Cardiac septum (tissue), 1 donor: ENCODE measurements at regions of chr6 and their contacts with region 1.

Region 1: GRCh38 chr6:170165072-170165463 is 125.8 kb downstream of the DLL1 start:
- DNase-seq: no peak

Region 2: DNA sequence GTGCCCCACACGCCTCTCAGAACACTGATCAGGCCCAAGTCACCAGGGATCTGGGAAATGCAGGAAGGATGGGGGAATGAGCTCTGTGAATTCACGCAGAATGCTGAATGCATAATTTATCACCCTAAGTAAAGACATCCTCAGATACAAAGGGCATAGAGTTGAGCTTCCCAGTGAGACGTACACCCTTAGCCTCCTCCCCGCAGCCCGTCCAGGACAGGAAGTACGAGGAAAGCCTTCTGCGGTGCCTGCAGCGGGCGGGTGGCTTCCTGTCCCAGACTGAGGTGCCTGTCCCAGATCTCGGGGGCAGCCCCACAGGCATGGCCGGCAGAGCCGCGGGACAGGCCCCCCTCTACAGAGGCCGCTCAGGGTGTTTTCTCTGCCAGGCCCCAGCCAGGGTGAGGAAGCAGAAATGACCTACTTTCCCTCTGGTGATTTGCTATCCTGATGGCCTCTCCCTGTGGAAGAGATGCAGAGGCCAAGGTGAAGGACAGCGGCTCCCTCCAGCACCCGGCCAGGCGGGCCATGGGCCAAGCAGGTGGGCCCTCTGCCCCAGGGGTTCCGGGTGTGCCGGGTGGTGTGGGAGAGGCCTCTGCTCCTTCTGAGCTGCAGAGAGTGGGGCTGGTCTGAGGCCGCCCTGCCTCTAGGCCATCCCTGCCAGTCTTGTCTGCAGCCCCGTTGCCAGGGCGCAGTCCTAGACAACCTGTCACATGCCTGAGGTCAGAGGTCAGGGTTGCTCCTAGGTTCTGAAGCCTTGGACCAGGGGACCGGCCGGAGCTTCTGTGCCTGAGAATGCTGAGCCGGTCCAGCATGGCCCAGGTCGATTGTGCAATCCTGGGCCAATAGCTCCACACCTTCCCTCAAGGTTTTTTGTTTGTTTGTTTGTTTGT is 172.5 kb before region 1 on chr6:
- intact Hi-C with region 1: no loop called
- DNase-seq: peak; percentile 72

Region 3: DNA sequence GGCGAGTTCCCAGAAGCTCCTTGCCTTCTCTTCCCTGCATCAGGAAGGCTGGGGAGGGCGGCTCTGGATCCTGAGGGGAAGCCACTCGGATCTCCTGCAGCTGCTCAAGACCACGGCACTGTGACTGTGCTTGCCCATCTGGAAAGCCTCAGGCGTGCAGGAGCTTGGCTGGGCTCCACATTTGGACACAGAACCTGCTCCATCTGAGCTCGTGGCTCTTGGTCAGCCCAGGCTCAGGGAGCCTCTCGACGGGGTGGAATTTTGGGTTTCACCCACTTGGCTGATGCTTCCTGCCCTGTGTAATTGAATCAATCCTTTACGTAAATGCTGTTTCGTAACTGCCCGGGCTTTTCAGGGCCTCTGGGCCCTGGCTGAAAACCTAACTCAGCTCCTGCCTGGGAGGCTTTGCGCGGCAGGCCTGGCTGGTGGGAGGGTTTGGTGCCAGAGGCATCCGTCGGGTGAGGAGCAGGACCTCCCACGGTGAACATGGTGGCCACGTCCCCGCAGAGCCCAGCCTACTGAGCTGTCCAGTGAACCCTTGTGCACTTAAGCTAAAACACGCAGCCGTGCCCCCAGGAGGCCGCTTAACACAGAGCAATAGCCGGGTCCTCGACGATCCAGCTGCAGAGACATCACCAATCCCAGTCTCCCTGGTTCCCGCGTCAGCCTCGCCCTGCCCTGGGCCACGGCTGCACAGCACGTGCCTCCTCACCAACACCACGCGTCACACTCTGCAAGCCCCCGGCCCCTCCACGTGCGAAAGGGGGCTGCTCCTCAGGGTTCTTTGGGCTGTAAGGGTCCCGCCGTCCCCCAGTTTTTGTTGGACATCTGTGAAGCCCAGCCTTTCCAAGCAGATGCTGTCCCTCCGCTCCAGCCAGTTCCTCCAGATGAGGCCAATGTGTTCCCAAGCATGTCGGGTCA is 115.2 kb before region 1 on chr6:
- intact Hi-C with region 1: loop called (anchors 10 kb)
- DNase-seq: peak; percentile 79

Region 4: GRCh38 chr6:170129691-170130171 is 35.3 kb before region 1 on chr6:
- intact Hi-C with region 1: no loop called
- DNase-seq: peak; percentile 82

Region 5: DNA sequence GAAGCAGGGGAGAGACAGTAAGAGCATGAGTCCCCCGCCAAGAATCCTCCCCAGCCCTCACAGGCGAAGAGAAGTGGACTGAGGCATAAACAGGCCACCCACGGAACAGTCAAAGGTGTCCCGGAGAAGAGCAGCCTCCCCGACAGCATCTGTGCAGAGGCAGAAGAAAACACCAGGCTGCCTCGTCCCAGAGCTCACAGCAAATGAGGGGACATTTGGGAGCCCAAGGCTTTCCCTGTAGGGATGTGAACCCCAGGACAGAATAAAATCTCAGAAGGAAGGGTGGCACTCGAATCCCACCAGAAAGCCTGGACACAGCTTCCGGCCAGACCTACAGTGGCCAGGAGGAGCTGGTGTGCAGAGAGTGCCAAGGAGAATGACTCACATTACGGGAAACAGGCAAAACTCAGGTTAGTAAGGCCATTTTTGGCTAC is 35.4 kb after region 1 on chr6:
- intact Hi-C with region 1: no loop called
- DNase-seq: no peak